ENCODE measurements at regions of chr2 and their contacts with region 1.

Region 1: DNA sequence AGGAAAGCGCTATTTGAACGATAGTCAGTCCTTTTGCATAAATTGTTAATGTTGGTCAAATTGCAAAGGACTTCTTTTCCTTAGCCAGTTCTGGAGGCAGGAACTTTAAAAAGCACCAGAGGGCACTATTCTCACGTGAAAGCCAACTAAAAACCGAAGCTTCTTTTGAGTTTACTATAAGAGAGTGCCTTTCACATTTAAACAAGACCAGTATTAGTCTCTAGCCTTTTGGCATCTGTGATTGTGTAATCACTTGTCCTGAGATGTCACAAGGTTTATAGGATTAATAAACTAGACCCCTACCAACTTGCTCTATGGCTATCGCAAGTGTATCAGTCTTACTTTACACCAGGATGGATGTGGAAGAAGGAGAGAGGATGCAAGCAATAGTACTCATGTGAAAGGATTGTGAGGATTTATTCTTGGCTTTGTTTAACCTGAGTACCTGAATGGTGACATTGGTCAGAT is 14.4 kb upstream of the STAT4 start:
- DNase-seq: no peak
- ATAC-seq: peak; percentile 79 to 84
- H3K4me3 ChIP-seq: no peak overlapping the region
- H3K27ac ChIP-seq: no peak overlapping the region
- H3K4me1 ChIP-seq: no peaks in the 10 kb centered on the region
- H3K27me3 ChIP-seq: no peaks in the 10 kb centered on the region

Region 2: DNA sequence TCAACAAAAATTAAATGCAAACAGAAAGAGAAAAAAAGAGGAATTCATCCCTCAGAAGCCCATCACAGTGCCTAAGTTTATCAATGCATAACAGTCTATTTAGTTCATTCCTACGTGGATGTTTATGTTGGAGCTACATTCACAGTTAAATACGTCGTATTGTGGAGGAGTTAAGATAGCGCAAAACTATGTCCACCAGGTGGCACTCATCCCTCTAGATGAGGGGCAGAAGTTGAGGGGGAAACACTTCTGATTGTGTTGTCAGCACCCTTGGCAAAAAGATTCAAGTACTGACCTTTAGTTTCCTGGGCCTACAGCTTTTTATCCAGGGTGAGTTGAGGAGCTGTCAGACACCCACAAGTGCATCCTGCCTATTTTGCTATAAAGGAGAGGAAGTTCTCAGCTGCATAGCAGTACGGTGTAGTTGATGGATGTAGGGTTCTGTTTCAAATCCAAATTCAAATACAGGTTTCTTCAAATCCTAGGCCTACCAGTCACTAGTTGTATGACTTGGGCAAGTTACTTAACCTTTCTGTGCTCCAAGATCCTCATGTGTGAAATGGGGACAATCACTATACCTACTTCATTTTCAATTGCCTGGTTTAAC is 53.2 kb after region 1 on chr2:
- intact Hi-C with region 1: loop called in 1 of 4 experiments (anchors 10 kb)
- DNase-seq: peak in 2 of 3 donors; percentile 35 to 61
- ATAC-seq: peak; percentile 62 to 81
- H3K4me3 ChIP-seq: no peak overlapping the region
- H3K27ac ChIP-seq: no peak overlapping the region
- H3K4me1 ChIP-seq: peaks cover 5% of the 10 kb centered on the region
- H3K27me3 ChIP-seq: no peaks in the 10 kb centered on the region

Region 3: DNA sequence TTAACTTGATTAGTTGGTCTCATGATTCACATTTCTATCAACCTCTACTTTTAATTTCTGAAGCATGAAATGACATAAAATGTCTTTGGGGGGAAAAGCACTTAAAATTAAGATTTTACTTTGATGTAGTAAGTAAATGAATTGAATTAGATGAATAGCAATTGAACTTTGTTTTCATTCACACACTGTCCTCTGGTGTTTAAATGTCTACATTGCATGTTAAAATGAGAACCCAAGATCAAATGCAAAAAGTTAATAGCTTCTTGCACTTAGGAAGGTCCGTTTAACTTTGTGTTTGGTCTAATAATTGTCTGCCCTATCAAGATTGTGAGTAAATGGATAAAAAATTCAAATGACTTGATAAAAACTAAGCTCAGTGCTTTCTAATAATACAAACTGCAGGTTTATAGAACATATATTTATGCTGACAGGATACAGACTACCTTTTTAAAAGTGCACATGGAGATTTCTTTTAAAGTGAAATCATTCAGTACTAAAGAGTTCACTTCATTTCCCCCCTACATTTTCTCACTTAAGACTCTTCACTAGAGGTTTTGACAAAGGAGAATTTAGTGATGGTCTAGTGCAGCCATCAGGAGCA is 356.5 kb after region 1 on chr2:
- intact Hi-C with region 1: loop called in 3 of 4 experiments (anchors 5 kb)
- DNase-seq: no peak
- ATAC-seq: no peak
- H3K4me3 ChIP-seq: no peak overlapping the region
- H3K27ac ChIP-seq: no peak overlapping the region
- H3K4me1 ChIP-seq: no peaks in the 10 kb centered on the region
- H3K27me3 ChIP-seq: no peaks in the 10 kb centered on the region